AG04450 (cell line): ENCODE measurements at regions of chr10 and their contacts with region 1.

Region 1: GRCh38 chr10:51422311-51423120 is 276.9 kb downstream of the CSTF2T start:
- DNase-seq: peak; percentile 32
- H3K4me3 ChIP-seq: no peak overlapping the region
- H3K27ac ChIP-seq: no peak overlapping the region
- H3K27me3 ChIP-seq: no peaks in the 10 kb centered on the region
- CTCF ChIP-seq: peak; percentile 80

Region 2: DNA sequence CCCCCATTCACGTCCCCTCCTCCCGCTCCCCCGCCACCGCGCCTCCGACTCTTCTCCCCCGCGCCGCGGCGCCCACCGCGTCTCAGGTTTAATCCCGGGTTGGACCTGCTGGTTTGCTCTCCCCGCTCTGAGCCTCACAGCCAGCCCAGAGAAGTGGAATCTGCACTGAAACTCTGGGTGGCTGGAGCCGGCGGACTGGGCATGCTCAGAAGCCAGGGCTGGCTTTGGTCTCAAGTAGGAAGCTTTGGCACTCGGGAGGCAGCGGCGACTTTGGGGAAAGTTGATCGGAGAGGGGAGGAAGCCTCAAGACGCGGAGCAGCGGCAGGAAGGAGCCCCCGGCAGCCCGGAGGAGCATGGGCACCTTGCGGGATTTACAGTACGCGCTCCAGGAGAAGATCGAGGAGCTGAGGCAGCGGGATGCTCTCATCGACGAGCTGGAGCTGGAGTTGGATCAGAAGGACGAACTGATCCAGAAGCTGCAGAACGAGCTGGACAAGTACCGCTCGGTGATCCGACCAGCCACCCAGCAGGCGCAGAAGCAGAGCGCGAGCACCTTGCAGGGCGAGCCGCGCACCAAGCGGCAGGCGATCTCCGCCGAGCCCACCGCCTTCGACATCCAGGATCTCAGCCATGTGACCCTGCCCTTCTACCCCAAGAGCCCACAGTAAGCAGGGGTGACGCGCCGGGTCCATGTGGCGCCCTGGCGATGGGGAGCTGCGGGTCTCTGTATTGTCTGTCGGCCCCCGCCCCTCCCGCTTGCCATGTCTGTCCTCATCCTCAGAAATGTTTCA is 348.1 kb before region 1 on chr10 and contains the start of gene PRKG1:
- CTCF ChIA-PET with region 1: interaction called, 16 read pairs
- POLR2A ChIA-PET with region 1: no interaction called
- DNase-seq: peak; percentile 67
- H3K4me3 ChIP-seq: peak within 1 kb of the TSS; percentile 88
- H3K27ac ChIP-seq: peak within 1 kb of the TSS; percentile 68
- H3K27me3 ChIP-seq: no peaks in the 10 kb centered on the region
- CTCF ChIP-seq: no peak
- polyA plus RNA-seq, gene PRKG1: 16.0 and 19.0 TPM in 2 replicates

Region 3: GRCh38 chr10:51083356-51083853 is 339.1 kb before region 1 on chr10:
- CTCF ChIA-PET with region 1: interaction called, 14 read pairs
- POLR2A ChIA-PET with region 1: no interaction called
- DNase-seq: peak; percentile 38
- H3K4me3 ChIP-seq: no peak overlapping the region
- H3K27ac ChIP-seq: no peak overlapping the region
- H3K27me3 ChIP-seq: no peaks in the 10 kb centered on the region
- CTCF ChIP-seq: peak; percentile 30; the same call in 1 of the 2 replicates

Region 4: DNA sequence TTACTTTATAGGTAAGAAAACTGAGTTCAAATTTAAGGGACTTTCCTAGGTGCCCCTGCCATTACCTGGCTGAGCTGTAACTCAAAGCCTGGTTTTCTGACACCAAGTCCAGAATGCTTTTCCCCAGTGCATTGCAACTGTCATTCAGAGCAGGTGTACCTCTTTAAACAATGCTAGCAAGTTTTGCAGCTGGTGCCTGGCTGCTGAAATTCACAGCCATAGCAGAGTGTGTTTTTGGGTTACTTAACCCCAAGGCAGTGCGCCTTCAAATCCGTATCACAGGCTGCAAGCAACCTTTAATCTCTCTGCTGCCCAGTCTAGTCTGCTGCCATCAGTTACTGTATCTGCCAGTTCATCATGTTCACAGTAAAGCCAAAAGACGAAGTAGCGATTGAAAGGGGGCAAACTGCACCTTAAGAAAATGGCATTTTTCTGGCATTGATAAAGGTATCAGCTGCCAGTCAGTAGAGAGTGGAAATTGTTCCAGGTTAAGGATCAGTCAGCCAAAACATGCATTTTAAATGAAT is 11.5 kb after region 1 on chr10:
- CTCF ChIA-PET with region 1: interaction called, 12 read pairs
- POLR2A ChIA-PET with region 1: no interaction called
- DNase-seq: no peak
- H3K4me3 ChIP-seq: no peak overlapping the region
- H3K27ac ChIP-seq: no peak overlapping the region
- H3K27me3 ChIP-seq: no peaks in the 10 kb centered on the region
- CTCF ChIP-seq: no peak